Mammary epithelial cell (primary cell): ENCODE measurements at regions of chr17 and their contacts with region 1.

Region 1: GRCh38 chr17:72592242-72592966 is 471.6 kb downstream of the SOX9 start:
- DNase-seq: peak; percentile 81
- H3K4me3 ChIP-seq: peak overlapping the region; percentile 79 to 93 (median 83)
- H3K27ac ChIP-seq: peak overlapping the region; percentile 98
- H3K4me1 ChIP-seq: peaks cover 20% of the 10 kb centered on the region
- H3K27me3 ChIP-seq: no peaks in the 10 kb centered on the region
- CTCF ChIP-seq: no peak

Region 2: DNA sequence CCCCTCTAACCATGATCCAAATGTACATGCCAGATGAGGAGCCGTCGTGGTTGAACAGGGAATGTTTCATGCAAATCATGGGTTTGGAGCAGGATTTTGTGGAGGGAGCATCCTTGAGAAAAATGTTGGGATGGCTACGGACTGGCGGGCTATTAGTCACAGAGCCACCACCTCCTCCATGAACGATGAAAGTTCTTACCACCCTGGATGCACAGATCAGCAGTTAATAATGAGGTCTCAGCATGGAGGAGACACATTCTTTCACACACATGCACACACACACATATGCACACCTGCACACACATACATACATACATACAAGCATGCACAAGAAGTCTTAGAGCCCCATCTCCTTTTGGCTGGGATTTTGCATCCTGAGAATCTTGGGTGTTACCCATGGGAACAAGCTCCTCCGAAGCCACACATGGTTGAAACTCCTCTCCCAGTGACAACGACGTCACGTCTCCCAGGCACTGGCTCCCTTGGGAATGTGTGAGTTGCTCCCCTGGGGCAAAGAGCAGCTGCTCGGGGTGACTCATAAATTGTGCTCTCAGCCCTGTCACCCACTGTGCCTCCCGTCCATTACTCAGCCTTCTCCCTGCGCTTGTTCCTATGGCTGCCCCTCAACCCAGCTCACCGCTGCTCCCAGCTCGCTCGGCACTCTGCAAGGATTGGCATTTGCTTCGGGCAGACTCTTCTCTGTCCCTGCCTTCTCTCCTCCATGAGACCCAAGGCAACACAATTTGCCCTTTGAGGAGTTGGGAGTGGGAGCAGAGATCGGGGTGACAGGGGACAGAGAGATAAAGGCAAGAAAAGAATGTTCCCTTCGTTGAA is 127.0 kb before region 1 on chr17:
- CTCF ChIA-PET with region 1: no interaction called
- dilution Hi-C with region 1: no loop called
- in situ Hi-C with region 1: no loop called
- intact Hi-C with region 1: no loop called
- DNase-seq: peak; percentile 99
- H3K4me3 ChIP-seq: peak overlapping the region in 1 of 3 experiments; percentile 2
- H3K27ac ChIP-seq: peak overlapping the region; percentile 98
- H3K4me1 ChIP-seq: peaks cover 64% of the 10 kb centered on the region
- H3K27me3 ChIP-seq: no peaks in the 10 kb centered on the region
- CTCF ChIP-seq: no peak

Region 3: DNA sequence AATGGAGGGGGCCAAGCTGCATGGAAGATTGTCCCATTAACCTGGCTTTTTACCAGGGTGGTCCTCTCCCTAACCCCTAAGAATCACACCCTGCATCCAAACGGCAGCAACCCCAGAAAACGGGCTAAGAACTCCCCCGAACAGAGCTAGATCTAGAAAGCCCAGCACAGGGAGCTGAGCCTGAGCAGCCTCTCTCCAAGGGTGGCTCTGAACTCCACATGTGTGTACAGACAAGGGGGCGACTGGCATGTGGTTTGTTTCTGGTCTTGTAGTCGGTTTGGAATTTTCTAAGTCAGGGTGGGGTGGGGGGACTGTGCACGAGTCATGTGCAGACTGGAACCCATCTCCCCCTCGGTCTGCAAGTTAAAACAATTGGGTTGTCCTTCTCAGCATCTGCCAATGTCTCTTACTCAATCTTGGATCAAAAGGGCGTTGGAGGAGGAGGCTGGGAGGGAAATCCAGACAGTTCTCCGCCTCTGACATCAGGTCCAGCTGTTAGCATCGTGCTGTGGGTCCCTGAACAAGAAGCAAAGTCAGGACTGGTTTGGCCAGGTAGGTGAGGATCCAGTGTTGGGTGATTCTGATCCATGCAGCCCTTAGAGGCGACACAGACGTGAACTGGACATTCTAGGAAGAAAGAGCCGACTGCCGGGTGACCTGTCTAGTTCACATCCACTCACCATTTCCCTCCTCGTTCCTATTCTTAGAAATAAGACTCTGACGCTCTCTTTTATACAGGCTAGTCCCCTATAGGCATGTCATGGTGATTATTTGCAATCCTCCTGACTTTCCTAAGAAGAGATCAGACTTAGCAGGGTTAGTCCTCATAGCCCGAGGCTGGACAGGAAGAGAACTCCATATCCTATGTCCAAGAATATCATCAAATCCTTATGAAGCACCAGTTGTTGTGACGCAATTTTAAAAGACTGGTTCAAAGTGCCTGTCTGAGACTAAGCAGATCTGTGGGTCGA is 89.7 kb before region 1 on chr17:
- CTCF ChIA-PET with region 1: no interaction called
- dilution Hi-C with region 1: no loop called
- in situ Hi-C with region 1: no loop called
- intact Hi-C with region 1: no loop called
- DNase-seq: no peak
- H3K4me3 ChIP-seq: no peak overlapping the region
- H3K27ac ChIP-seq: no peak overlapping the region
- H3K4me1 ChIP-seq: peaks cover 4% of the 10 kb centered on the region
- H3K27me3 ChIP-seq: no peaks in the 10 kb centered on the region
- CTCF ChIP-seq: no peak

Region 4: DNA sequence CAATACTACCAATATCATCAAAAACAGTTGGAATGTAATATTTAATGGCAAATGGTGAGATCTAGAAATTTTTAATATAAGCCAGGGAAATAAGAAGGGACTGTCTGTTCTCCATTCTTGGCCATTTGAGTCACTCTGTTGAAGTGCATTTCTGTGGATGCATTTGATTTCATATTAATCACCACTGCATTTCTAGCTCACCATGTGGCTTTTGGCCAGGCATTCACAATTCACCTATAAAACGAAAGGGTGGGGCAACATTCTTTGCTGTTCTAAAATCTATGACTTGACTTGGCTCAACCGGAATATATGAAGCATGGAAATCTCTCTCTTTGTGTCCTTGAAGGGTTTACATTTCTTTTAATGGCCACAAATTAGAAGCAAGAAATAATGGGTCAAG is 17.1 kb after region 1 on chr17:
- CTCF ChIA-PET with region 1: no interaction called
- dilution Hi-C with region 1: no loop called
- in situ Hi-C with region 1: no loop called
- intact Hi-C with region 1: loop called (anchors 1 kb)
- DNase-seq: peak; percentile 91
- H3K4me3 ChIP-seq: no peak overlapping the region
- H3K27ac ChIP-seq: peak overlapping the region; percentile 88
- H3K4me1 ChIP-seq: peaks cover 28% of the 10 kb centered on the region
- H3K27me3 ChIP-seq: no peaks in the 10 kb centered on the region
- CTCF ChIP-seq: no peak

Region 5: DNA sequence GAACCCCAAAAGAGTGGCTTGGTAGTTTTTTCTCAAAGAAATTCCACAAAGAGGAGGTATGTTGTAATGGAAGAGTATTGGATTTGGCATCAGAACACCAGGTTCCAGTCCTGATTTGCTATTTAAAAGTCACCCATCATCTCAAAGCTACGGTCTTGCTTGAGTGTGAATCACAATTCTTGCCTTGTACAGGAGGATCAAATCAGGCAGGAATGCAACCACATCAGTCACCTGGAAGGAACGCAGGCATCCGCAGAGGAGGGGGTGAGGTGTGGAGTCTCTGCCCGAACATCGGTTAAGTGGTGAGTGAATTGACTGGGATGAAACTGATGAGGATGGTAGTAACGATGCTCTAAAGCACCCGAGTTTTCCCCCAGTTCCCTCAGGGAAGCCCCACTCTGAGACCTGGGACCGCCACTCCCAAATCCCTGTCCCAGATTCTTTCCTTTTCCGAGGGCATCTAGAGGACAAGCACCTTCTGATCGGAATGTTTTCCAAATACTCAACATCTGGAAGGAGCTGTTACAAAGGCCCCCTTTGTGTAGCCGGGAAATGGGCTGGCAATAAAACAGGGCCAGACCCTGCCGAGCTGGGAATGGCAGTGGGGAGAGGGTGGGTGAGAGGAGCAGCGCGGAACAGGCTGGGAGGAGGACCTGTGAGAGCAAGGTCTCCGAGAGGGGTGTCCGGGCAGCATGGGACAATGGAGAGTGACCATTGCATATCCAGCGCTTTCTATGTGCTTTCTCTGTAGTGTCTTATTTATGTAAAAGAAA is 30.4 kb after region 1 on chr17:
- CTCF ChIA-PET with region 1: no interaction called
- dilution Hi-C with region 1: no loop called
- in situ Hi-C with region 1: no loop called
- intact Hi-C with region 1: loop called (anchors 1 kb)
- DNase-seq: peak; percentile 95
- H3K4me3 ChIP-seq: peak overlapping the region in 1 of 3 experiments; percentile 6
- H3K27ac ChIP-seq: peak overlapping the region; percentile 85
- H3K4me1 ChIP-seq: peaks cover 37% of the 10 kb centered on the region
- H3K27me3 ChIP-seq: no peaks in the 10 kb centered on the region
- CTCF ChIP-seq: no peak

Region 6: DNA sequence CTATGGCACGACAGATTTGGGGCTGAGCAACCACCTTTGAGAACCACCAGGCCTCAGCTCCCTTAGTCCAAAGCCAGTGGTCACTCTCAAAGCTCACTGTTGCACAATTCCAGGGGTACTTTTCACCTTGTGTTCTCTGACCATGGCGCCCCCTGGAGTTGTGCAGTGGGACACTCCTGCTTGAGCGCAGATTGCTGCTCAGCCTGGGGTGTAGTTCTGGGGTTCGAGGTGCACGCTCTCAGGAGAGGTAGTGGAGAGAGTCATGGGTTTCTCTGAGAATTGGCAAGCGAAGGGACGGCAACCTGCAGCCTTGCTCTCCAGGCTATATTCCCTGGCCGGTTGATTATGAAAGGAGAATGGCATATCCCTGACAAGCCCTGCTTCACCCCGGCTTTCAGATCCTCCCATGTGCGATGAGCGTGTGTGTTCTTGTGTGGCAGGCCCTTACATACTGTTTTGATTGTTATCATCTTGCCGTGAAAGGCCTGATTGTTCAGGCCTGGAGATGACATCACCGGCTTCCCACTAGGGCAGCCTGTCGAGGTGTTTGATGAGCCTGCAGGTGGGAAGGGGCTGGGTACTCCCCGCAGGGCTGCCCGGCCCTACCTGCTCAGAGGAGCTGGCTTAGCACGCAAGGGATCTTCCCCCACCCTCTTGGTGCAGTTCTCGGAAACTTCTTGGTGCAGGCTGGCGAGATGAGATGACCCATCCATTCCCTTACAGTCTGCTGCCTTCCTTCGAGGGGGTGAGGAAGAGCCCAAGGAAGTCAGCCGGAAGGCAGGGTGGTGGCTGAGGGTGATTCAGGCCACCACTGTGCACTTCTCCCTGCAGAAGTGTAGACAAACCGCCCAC is 68.9 kb after region 1 on chr17:
- CTCF ChIA-PET with region 1: no interaction called
- dilution Hi-C with region 1: no loop called
- in situ Hi-C with region 1: no loop called
- intact Hi-C with region 1: loop called (anchors 1 kb)
- DNase-seq: peak; percentile 100
- H3K4me3 ChIP-seq: no peak overlapping the region
- H3K27ac ChIP-seq: peak overlapping the region; percentile 83
- H3K4me1 ChIP-seq: peaks cover 37% of the 10 kb centered on the region
- H3K27me3 ChIP-seq: no peaks in the 10 kb centered on the region
- CTCF ChIP-seq: peak; percentile 71 to 74

Region 7: DNA sequence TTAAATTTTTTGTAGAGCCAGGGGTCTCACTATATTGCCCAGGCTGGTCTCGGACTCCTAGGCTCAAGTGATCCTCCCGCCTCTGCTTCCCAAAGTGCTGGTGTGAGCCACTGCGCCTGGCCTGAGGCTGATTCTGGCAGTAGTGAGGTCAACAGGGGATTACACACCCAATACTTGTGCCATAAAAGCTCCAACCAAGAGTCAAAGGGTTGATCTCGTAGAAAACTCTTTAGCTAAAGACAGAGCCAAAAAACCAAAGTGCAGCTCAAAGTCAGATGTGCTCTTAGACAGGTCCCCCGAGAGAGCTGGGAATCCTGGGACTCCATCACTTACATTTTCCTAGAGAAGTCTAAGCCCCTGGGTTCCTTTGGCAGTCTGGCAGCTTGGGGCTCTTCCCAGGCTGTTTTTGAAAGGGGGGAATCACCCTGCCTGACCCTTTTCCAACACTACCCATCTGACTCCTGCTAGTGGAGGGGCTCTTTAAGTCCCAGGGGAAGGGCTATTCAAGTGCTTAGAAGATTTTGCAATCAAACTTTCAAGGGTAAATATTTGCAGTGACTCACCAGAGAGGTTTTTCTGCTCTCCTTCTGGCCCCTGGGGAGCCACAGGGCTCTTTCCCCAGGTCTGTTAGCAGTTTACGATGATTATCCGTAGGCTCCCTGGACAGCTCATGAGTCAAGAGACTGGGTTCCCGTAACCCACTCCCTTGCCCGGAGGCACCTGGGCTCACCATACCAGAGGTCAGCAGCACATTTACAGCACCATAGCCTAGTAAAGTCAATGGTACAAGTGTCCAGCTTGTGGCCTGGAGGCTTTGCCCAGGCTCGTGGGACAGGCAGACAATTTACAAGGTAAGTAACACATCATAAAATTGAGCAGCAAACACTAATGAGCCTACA is 91.4 kb after region 1 on chr17:
- CTCF ChIA-PET with region 1: no interaction called
- dilution Hi-C with region 1: loop called (anchors 10 kb)
- in situ Hi-C with region 1: no loop called
- intact Hi-C with region 1: loop called (anchors 1 kb)
- DNase-seq: peak; percentile 95
- H3K4me3 ChIP-seq: no peak overlapping the region
- H3K27ac ChIP-seq: peak overlapping the region; percentile 58
- H3K4me1 ChIP-seq: peaks cover 50% of the 10 kb centered on the region
- H3K27me3 ChIP-seq: no peaks in the 10 kb centered on the region
- CTCF ChIP-seq: no peak

Region 8: DNA sequence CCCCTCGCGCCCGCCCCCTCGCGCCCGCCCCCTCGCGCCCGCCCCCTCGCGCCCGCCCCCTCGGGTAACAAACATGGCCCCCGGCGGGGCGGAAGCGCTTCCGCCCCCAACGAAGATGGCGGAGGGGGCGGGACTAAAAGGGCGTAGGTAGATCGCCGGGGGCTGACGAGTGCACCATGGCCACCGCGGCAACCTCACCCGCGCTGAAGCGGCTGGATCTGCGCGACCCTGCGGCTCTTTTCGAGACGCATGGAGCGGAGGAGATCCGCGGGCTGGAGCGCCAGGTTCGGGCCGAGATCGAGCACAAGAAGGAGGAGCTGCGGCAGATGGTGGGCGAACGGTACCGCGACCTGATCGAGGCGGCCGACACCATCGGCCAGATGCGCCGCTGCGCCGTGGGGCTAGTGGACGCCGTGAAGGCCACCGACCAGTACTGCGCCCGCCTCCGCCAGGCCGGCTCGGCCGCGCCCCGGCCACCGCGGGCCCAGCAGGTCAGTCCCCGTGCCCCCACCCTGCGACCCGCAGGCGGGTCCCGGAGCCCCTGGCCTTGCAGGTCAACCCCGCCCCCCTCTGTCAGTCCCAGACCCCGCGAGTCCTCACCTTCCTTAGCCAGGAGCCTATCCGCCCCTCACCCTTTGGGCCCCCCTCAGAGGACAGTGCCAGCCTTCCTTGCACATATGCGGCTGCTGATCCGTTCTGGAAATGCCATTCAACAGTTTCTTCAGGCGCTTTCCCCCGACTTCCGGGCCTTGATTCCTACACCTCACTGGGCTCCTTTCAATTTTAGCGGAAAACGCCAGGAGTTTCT is 600.7 kb after region 1 on chr17 and contains the start of gene COG1:
- CTCF ChIA-PET with region 1: no interaction called
- dilution Hi-C with region 1: no loop called
- in situ Hi-C with region 1: no loop called
- intact Hi-C with region 1: loop called (anchors 10 kb)
- DNase-seq: peak; percentile 86
- H3K4me3 ChIP-seq: peak within 1 kb of the TSS; percentile 73 to 96 (median 80)
- H3K27ac ChIP-seq: peak within 1 kb of the TSS; percentile 57
- H3K4me1 ChIP-seq: peaks cover 4% of the 10 kb centered on the region
- H3K27me3 ChIP-seq: no peaks in the 10 kb centered on the region
- CTCF ChIP-seq: no peak
- total RNA-seq, gene COG1: 23.3 to 35.2 TPM